Gastrocnemius medialis (tissue), 4 donors: ENCODE measurements at regions of chr5 and their contacts with region 1.

Region 1: DNA sequence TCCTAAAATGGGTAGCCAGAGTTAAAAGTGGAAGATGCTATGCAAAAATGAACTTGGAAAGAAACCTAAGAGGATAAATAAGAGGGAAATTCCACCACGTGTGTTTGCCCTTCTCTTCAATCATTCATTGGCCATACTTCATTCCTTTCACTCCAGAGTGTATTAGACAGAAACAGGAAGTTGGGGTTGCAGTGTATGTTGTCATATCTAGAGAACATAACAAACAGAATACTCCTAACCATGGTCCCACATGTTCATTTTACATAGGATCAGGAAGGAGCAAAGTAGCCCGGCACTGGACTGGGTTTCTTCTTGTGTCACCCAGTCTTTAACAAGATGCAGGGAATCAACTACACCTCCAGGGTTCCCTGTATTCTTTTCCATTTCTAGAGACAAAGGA is 7.6 kb upstream of the GPBP1 start:
- DNase-seq: no peak
- ATAC-seq: no peak
- H3K4me3 ChIP-seq: no peak overlapping the region
- H3K27ac ChIP-seq: no peak overlapping the region
- H3K4me1 ChIP-seq: no peaks in the 10 kb centered on the region
- H3K27me3 ChIP-seq: no peaks in the 10 kb centered on the region
- CTCF ChIP-seq: no peak
- POLR2A ChIP-seq: no peak

Region 2: DNA sequence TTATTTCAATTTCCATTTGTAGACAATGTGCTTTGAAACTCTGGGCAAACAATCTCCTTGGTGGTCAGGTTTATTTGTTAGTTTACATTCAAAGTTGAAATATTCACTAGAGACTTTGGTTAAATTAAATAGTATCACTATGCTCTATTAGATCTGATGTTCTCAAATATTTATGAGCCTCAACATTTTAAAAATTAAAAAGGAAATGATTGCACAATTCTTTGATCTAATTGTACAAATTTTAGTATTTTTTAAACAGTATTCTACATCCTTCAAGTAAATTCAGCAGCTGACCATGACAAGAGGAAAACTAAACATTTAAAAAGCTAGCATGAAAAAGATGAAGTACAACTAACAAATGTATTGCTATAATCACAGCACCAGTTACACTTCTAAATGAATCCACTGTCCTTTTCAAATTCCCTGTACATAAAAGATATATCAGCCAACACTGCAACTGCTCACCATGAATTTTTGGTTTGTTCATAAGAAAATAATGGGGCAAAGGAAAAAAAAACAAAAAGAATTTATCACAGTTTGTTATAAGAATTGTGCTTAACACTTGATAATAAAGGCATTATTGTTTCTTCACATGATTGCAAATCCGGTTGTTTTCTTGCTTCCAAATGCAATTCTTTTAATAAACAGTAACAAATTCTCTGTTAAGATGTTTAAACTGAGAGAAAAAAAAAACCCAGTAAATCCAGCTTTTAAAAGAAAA is 246.2 kb before region 1 on chr5:
- in situ Hi-C with region 1: loop called in 1 of 4 experiments (anchors 10 kb)
- intact Hi-C with region 1: no loop called
- DNase-seq: no peak
- ATAC-seq: no peak
- H3K4me3 ChIP-seq: no peak overlapping the region
- H3K27ac ChIP-seq: no peak overlapping the region
- H3K4me1 ChIP-seq: peaks cover 6 to 7% of the 10 kb centered on the region in 2 donors
- H3K27me3 ChIP-seq: no peaks in the 10 kb centered on the region
- CTCF ChIP-seq: no peak
- POLR2A ChIP-seq: no peak

Region 3: DNA sequence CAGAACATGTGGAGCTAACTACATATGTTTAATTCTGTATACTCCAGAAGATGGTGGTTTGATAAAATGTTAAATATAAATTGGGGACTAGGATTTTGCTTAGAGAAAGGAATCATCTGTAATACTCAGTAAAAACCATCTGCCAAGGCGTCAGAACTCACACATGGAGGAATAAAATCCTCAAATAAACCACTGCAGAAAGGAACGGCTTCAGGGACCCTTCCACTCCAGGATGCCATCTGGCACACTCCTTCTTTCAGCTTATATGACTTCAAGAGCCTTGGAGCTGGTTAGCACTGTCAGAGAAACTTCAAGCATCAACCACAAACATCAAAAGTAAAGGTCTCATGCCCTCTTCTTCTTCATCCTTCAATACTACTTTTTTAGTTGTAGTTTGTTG is 933.0 kb after region 1 on chr5:
- in situ Hi-C with region 1: no loop called
- intact Hi-C with region 1: no loop called
- DNase-seq: no peak
- ATAC-seq: no peak
- H3K4me3 ChIP-seq: no peak overlapping the region
- H3K27ac ChIP-seq: no peak overlapping the region
- H3K4me1 ChIP-seq: no peaks in the 10 kb centered on the region
- H3K27me3 ChIP-seq: no peaks in the 10 kb centered on the region
- CTCF ChIP-seq: no peak
- POLR2A ChIP-seq: no peak